Activated CD4-positive, alpha-beta T cell treated with anti-CD3 and anti-CD28 coated beads, Interleukin-2, amount 10 ng/mL, durations not matched to agents 24 days and 14 days (primary cell): ENCODE measurements at regions of chr9 and their contacts with region 1.

Region 1: GRCh38 chr9:6412487-6413364 is at the start of gene UHRF2:
- DNase-seq: peak; percentile 99
- H3K4me3 Mint-ChIP-seq: peak within 1 kb of the TSS; percentile 88
- H3K27ac Mint-ChIP-seq: peak within 1 kb of the TSS; percentile 97
- H3K4me1 Mint-ChIP-seq: peaks cover 27% of the 10 kb centered on the region
- H3K27me3 Mint-ChIP-seq: peaks cover 4% of the 10 kb centered on the region
- total RNA-seq, gene UHRF2: 61.9 and 71.6 TPM in 2 replicates

Region 2: DNA sequence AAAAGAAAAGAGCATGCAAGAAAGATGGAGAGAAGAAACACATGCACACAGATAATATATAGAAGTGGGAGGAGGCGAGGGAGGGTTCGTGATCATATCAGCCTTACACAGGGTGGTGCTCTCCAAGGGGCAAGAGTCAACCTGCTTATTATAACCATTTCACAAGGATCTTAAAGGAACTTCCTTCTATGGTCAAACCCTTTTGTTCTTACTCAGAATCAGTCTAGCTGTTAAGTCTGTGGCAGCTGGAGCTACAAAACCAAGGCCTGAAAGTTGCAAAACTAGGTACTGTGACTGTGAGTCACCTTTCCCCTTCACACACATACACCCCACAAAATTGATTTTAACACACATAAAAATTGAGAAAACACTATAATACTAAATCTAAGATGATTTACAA is 561.3 kb before region 1 on chr9:
- intact Hi-C with region 1: loop called (anchors 5 kb)
- DNase-seq: peak; percentile 84
- H3K4me3 Mint-ChIP-seq: peak overlapping the region; percentile 48
- H3K27ac Mint-ChIP-seq: peak overlapping the region; percentile 67
- H3K4me1 Mint-ChIP-seq: peaks cover 55% of the 10 kb centered on the region
- H3K27me3 Mint-ChIP-seq: no peaks in the 10 kb centered on the region

Region 3: DNA sequence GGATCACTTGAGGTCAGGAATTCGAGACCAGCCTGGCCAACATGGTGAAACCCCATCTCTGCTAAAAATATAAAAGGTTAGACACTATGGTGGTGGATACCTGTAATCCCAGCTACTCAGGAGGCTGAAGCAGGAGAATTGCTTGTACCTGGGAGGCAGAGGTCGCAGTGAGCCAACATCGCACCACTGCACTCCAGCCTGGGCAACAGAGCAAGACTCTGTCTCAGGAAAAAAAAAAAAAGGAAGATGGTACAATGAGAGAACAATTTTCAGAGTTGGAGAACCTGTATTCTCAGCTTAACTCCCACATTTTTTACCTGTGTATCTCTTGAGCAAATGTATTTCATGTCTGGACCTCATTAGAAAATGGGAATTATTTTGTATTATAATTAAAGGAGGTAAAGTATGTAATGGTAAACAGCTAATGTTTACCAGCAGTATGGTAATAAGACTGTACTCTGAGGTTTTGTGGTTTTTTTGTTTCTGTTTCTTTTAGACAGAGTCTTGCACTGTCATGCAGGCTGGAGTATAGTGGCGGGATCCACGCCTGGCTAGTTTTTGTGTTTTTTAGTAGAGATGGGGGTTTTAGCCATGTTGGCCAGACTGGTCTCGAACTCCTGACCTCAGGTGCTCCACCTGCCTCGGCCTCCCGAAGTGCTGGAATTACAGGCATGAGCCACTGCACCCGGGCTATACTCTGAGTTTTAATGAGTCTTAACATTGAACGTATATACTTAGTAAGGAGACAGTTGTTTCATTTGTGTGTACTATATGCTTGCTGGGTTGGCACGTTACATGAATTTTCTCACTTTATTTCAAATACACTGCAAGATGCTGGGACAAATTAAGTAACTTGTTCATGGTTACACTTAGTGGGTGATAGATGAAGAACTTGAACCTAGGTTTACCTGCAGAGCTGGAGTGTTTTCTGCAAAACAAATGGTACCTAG is 16.5 kb after region 1 on chr9:
- intact Hi-C with region 1: loop called (anchors 1 kb)
- DNase-seq: peak; percentile 80
- H3K4me3 Mint-ChIP-seq: peak overlapping the region; percentile 40
- H3K27ac Mint-ChIP-seq: peak overlapping the region; percentile 72
- H3K4me1 Mint-ChIP-seq: peaks cover 59% of the 10 kb centered on the region
- H3K27me3 Mint-ChIP-seq: no peaks in the 10 kb centered on the region

Region 4: DNA sequence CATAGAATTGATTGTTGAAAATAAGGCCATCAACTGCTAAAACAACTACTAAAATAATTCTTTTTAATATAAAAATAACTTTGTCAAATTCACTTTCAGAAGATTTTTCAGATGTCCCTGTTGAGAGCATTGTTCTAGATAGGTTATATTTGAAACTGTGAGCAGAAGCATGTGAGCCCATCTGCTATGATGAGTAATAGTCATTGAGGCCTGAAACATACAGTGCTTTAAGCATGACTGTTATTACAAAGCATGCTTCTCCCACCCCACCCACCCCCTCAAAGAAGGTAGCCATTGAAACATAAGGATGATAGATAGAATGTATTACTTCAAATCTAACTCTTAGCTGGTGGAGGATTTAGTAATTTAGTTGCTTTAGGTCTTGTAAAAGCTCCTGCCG is 86.3 kb after region 1 on chr9:
- intact Hi-C with region 1: loop called (anchors 5 kb)
- DNase-seq: no peak
- H3K4me3 Mint-ChIP-seq: no peak overlapping the region
- H3K27ac Mint-ChIP-seq: no peak overlapping the region
- H3K4me1 Mint-ChIP-seq: peaks cover 4% of the 10 kb centered on the region
- H3K27me3 Mint-ChIP-seq: no peaks in the 10 kb centered on the region

Region 5: GRCh38 chr9:6681147-6681956 is 268.6 kb after region 1 on chr9:
- intact Hi-C with region 1: loop called (anchors 1 kb)
- DNase-seq: peak; percentile 96
- H3K4me3 Mint-ChIP-seq: peak overlapping the region; percentile 97
- H3K27ac Mint-ChIP-seq: peak overlapping the region; percentile 99
- H3K4me1 Mint-ChIP-seq: peaks cover 13% of the 10 kb centered on the region
- H3K27me3 Mint-ChIP-seq: no peaks in the 10 kb centered on the region